ENCODE measurements at regions of chr1 and their contacts with region 1.

Region 1: GRCh38 chr1:235147269-235147668 is 13.8 kb downstream of the RBM34 start:
- DNase-seq: no peak
- H3K4me3 Mint-ChIP-seq: no peak overlapping the region
- H3K27ac Mint-ChIP-seq: peak overlapping the region; percentile 14
- H3K4me1 Mint-ChIP-seq: peaks cover 21% of the 10 kb centered on the region
- H3K27me3 Mint-ChIP-seq: no peaks in the 10 kb centered on the region

Region 2: GRCh38 chr1:235128456-235129328 is 18.6 kb before region 1 on chr1 and contains the start of gene TOMM20:
- CTCF ChIA-PET with region 1: no interaction called
- POLR2A ChIA-PET with region 1: no interaction called
- intact Hi-C with region 1: loop called (anchors 1 kb)
- DNase-seq: peak; percentile 98
- H3K4me3 Mint-ChIP-seq: peak within 1 kb of the TSS; percentile 86
- H3K27ac Mint-ChIP-seq: peak within 1 kb of the TSS; percentile 94
- H3K4me1 Mint-ChIP-seq: peaks cover 41% of the 10 kb centered on the region
- H3K27me3 Mint-ChIP-seq: no peaks in the 10 kb centered on the region
- total RNA-seq, gene TOMM20: 127 to 142 TPM

Region 3: GRCh38 chr1:235253219-235253962 is 106.1 kb after region 1 on chr1:
- CTCF ChIA-PET with region 1: no interaction called
- POLR2A ChIA-PET with region 1: no interaction called
- intact Hi-C with region 1: no loop called
- DNase-seq: peak; percentile 75
- H3K4me3 Mint-ChIP-seq: no peak overlapping the region
- H3K27ac Mint-ChIP-seq: no peak overlapping the region
- H3K4me1 Mint-ChIP-seq: peaks cover 24% of the 10 kb centered on the region
- H3K27me3 Mint-ChIP-seq: no peaks in the 10 kb centered on the region

Measured in activated CD4-positive, alpha-beta memory T cell treated with anti-CD3 and anti-CD28 coated beads for 36 hours (primary cell).